Dendritic cell treated with granulocyte-macrophage colony-stimulating factor and Interleukin-4, amounts not matched to agents 40 ng/mL and 50 ng/mL, for 4 days (primary cell): ENCODE measurements at regions of chr16 and their contacts with region 1.

Region 1: GRCh38 chr16:85838381-85838780 is 38.9 kb downstream of the COX4I1 start:
- H3K4me3 Mint-ChIP-seq: peak overlapping the region; percentile 51
- H3K27ac Mint-ChIP-seq: peak overlapping the region; percentile 85
- H3K4me1 Mint-ChIP-seq: peaks cover 44% of the 10 kb centered on the region
- H3K27me3 Mint-ChIP-seq: peaks cover 53% of the 10 kb centered on the region

Region 2: DNA sequence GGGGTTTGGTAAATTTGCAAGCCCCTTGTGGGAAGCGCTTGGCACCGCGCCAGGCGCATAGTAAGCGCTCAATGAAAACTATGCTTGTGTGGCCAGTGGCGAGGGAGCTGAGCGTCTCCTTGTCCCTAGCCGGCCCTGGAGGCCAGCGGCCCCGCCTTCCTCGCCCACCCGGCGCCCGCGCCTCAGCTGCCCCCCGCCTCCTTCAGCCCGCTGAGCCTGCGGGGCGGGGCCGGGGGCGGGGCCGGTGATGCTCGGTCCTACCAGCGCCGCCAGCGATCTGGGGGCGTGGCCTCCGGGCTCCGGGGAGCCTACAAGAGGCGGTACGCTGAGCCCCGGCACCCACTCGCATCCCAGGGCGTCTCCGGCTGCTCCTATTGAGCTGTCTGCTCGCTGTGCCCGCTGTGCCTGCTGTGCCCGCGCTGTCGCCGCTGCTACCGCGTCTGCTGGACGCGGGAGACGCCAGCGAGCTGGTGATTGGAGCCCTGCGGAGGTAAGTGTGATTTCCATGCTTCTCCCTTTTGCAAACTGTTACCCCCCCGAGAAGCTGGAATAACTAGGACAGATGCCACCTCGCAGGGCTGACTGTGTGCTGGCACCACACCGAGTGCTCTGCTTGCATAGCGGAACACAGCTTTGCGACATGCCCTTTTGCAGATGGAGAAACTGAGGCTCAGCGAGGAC is 1018.6 kb before region 1 on chr16 and contains the start of gene CRISPLD2:
- intact Hi-C with region 1: no loop called
- H3K4me3 Mint-ChIP-seq: peak within 1 kb of the TSS; percentile 70
- H3K27ac Mint-ChIP-seq: peak within 1 kb of the TSS; percentile 11
- H3K4me1 Mint-ChIP-seq: peaks cover 65% of the 10 kb centered on the region
- H3K27me3 Mint-ChIP-seq: peaks cover 22% of the 10 kb centered on the region

Region 3: GRCh38 chr16:85879975-85880831 is 41.8 kb after region 1 on chr16:
- intact Hi-C with region 1: loop called (anchors 5 kb)
- H3K4me3 Mint-ChIP-seq: no peak overlapping the region
- H3K27ac Mint-ChIP-seq: no peak overlapping the region
- H3K4me1 Mint-ChIP-seq: peaks cover 59% of the 10 kb centered on the region
- H3K27me3 Mint-ChIP-seq: peaks cover 21% of the 10 kb centered on the region